HEK293 (cell line): ENCODE measurements at regions of chr19 and their contacts with region 1.

Region 1: GRCh38 chr19:56140583-56141416 is at the start of gene ZNF444:
- H3K4me3 ChIP-seq: peak within 1 kb of the TSS; percentile 81
- H3K27ac ChIP-seq: peak within 1 kb of the TSS; percentile 86
- H3K4me1 ChIP-seq: peaks cover 12% of the 10 kb centered on the region
- CTCF ChIP-seq: no peak

Region 2: DNA sequence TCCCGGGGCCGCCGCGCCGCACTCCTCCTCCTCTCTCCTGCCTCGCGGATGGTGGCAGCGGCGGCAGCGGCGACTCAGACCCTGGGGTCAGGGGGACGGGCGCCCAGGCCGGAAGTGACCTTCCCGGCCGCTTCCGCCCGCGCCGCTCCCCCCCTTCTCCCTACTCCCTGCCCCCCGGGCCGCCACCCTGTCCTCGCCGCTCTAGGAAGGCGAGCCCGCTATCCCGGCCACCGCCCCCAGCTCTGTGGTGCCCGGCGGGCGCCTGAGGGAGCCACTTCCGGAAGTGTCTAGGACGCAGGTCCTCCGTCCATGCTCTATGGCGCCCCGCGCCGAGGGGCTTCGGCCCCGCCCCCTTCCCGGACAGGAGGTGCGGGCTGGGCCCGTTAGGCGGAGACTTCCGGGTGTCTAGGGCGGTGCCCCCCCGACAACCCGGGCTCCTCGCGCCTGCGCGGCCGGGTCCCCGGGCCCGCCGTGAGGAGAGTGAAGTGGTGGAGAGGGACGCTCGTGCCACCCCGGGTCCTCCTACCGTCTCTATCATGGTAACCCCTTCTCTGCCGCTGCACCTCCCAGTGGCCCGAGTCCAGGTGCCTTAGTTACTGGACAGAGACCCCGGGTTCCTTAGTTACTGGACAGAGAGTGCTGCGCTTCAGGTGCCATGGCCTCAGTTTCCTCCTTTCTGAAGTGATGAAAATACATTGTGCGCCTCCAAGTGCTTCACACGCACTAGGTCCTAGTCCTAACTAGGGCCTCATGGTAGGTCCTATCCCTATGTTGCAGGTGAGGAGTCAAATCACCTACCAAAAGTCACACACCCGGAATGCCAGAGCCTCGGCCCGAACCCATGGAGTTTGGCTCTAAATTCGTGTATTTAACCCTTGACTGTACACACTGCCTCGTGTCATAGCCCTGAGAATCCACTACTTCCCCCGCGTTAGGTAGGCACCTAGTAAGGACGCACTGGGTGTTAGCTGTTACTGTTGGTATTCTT is 19.3 kb before region 1 on chr19 and contains the start of gene ZNF787:
- CTCF ChIA-PET with region 1: interaction called, 3 read pairs
- POLR2A ChIA-PET with region 1: interaction called, 26 read pairs
- H3K4me3 ChIP-seq: peak within 1 kb of the TSS; percentile 74
- H3K27ac ChIP-seq: peak within 1 kb of the TSS; percentile 94
- H3K4me1 ChIP-seq: peaks cover 3% of the 10 kb centered on the region
- CTCF ChIP-seq: 0 out of 2 replicates have a peak, but pooled peaks have one; percentile 7